ENCODE measurements at regions of chr20 and their contacts with region 1.

Region 1: DNA sequence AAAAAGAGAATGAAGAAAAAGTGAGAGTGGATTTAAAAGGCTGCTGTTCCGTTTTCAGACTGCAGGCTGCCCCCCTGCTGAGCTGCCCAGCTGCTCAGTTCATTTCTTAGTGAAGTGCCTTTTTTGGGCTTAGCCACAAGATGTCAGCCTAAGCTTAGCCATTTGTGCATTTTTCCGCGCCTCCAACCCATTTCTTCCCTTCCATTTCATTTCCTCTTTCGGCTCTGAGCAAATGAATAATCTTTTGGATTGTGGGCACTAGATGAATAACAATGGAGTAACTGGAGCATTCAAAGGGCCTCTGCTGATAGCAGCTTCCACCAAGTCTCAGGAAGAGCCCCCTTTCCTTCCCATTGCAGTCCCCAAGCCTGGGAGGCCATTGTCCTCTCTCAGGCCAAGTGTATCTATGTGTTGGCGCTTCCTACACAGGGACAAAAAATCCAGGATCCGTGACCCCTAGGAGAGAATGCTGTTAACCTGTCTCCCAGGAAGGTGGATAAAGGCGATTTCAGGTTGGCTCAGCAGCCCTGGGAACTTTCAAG is 83.5 kb upstream of the SPTLC3 start:
- DNase-seq: peak; percentile 36 to 75 (median 55)
- H3K4me3 ChIP-seq: no peak overlapping the region
- H3K27ac ChIP-seq: no peak overlapping the region
- H3K4me1 ChIP-seq: no peaks in the 10 kb centered on the region
- H3K27me3 ChIP-seq: no peaks in the 10 kb centered on the region
- CTCF ChIP-seq: peak; percentile 78 to 91 (median 88)
- POLR2A ChIP-seq: no peak

Region 2: DNA sequence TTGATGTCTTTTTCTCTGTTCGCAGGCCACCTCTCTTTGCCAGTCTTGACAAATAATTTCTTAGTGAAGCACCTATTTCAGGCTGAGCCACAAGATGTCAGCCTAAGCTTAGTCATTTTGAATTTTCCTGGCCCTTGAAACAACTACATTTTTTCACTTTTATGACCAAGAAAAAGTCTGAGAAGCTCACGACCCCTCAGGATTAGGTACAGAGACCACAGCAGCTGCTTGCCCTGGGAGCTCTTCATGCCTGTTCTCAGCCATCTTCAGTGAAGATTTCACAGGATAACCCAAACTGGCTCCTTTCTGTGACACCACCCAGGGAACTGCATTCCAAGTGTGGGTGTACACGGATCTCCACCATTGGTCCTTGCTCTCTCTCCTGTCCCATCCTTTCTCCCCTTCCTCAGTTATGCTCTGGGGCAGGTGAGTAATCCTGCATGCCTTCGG is 45.1 kb after region 1 on chr20:
- intact Hi-C with region 1: loop called in 1 of 2 experiments (anchors 5 kb)
- DNase-seq: peak in 4 of 7 donors; percentile 15 to 45 (median 26)
- H3K4me3 ChIP-seq: no peak overlapping the region
- H3K27ac ChIP-seq: no peak overlapping the region
- H3K4me1 ChIP-seq: no peaks in the 10 kb centered on the region
- H3K27me3 ChIP-seq: no peaks in the 10 kb centered on the region
- CTCF ChIP-seq: peak; percentile 41 to 78 (median 70)
- POLR2A ChIP-seq: no peak

Region 3: GRCh38 chr20:13105864-13106457 is 180.7 kb after region 1 on chr20:
- intact Hi-C with region 1: loop called in 1 of 2 experiments (anchors 10 kb)
- DNase-seq: peak in 1 of 7 donors; percentile 7
- H3K4me3 ChIP-seq: no peak overlapping the region
- H3K27ac ChIP-seq: no peak overlapping the region
- H3K4me1 ChIP-seq: peaks cover 0 to 6% of the 10 kb centered on the region in 2 donors
- H3K27me3 ChIP-seq: no peaks in the 10 kb centered on the region
- CTCF ChIP-seq: peak; percentile 51 to 82 (median 64)
- POLR2A ChIP-seq: no peak